ENCODE measurements at regions of chr1 and their contacts with region 1.

Region 1: GRCh38 chr1:8848663-8849386 is 29.7 kb downstream of the ENO1 start:
- DNase-seq: peak; percentile 72
- H3K4me3 Mint-ChIP-seq: no peak overlapping the region
- H3K27ac Mint-ChIP-seq: no peak overlapping the region
- H3K4me1 Mint-ChIP-seq: peaks cover 14% of the 10 kb centered on the region
- H3K27me3 Mint-ChIP-seq: no peaks in the 10 kb centered on the region

Region 2: GRCh38 chr1:8813016-8813763 is 35.6 kb before region 1 on chr1:
- CTCF ChIA-PET with region 1: interaction called, 10 read pairs
- POLR2A ChIA-PET with region 1: interaction called, 3 read pairs
- DNase-seq: no peak
- H3K4me3 Mint-ChIP-seq: no peak overlapping the region
- H3K27ac Mint-ChIP-seq: no peak overlapping the region
- H3K4me1 Mint-ChIP-seq: peaks cover 38% of the 10 kb centered on the region
- H3K27me3 Mint-ChIP-seq: no peaks in the 10 kb centered on the region

Region 3: GRCh38 chr1:8835941-8836643 is 12.7 kb before region 1 on chr1:
- CTCF ChIA-PET with region 1: interaction called, 32 read pairs
- POLR2A ChIA-PET with region 1: interaction called, 3 read pairs
- DNase-seq: no peak
- H3K4me3 Mint-ChIP-seq: no peak overlapping the region
- H3K27ac Mint-ChIP-seq: no peak overlapping the region
- H3K4me1 Mint-ChIP-seq: peaks cover 3% of the 10 kb centered on the region
- H3K27me3 Mint-ChIP-seq: peaks cover 9% of the 10 kb centered on the region

Measured in activated CD4-positive, alpha-beta T cell treated with anti-CD3 and anti-CD28 coated beads, Interleukin-2, amount 10 ng/mL, durations not matched to agents 7 days and 5 days (primary cell).